ENCODE measurements at regions of chr4 and their contacts with region 1.

Region 1: DNA sequence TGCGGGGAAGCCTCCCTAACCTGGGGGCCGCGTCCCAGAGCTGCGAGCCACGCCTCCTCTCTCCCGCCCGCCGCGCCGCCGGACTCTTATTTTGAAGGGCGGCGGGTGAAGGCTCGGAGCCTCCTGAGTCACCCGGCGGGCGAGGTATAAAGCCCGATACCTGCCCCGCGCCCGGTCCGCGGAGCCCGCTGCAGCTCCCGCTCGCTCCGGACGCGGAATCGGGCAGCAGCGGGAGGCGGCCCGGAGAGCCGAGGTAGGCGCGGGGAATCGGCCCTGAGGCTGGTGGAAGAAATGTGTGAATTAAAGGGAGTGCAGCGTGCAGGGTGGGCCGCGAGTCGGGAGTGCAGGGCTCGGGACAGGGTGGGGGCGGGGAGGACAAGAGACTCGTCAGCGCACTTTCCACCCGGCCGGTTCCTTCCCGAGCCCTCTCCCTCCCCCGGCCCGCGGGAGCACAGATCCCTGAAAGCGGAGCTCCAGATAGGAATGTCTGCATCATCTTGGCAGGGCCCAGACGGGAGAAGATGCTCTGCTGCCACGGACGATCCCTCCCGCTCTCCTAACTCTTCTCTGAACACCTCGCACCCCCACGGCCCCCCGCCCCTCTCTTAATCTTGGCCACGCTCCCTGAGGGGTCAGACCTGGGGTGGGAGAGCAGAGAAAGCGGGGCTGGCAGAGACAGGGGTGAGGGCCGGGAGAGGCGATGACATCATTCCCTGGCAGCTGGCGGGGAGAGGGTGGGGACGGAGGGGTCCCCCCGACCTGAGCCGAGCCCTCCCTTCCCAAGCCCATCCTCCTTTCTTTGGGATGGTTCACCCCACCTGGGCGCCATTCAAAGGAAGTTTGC is 177.9 kb downstream of the CBR4 start:
- DNase-seq: peak; percentile 67 to 79
- H3K4me3 ChIP-seq: peak overlapping the region; percentile 60
- H3K4me3 Mint-ChIP-seq: peak overlapping the region; percentile 71
- H3K27ac Mint-ChIP-seq: peak overlapping the region; percentile 9
- H3K4me1 ChIP-seq: no peaks in the 10 kb centered on the region
- H3K4me1 Mint-ChIP-seq: no peaks in the 10 kb centered on the region
- H3K27me3 ChIP-seq: no peaks in the 10 kb centered on the region
- H3K27me3 Mint-ChIP-seq: no peaks in the 10 kb centered on the region
- CTCF ChIP-seq: no peak

Region 2: GRCh38 chr4:168724686-168725411 is 107.3 kb before region 1 on chr4:
- CTCF ChIA-PET with region 1: no interaction called
- POLR2A ChIA-PET with region 1: interaction called, 11 read pairs
- intact Hi-C with region 1: no loop called
- DNase-seq: no peak
- H3K4me3 ChIP-seq: no peak overlapping the region
- H3K4me3 Mint-ChIP-seq: no peak overlapping the region
- H3K27ac Mint-ChIP-seq: no peak overlapping the region
- H3K4me1 ChIP-seq: no peaks in the 10 kb centered on the region
- H3K4me1 Mint-ChIP-seq: no peaks in the 10 kb centered on the region
- H3K27me3 ChIP-seq: no peaks in the 10 kb centered on the region
- H3K27me3 Mint-ChIP-seq: peaks cover 8% of the 10 kb centered on the region
- CTCF ChIP-seq: no peak

Region 3: GRCh38 chr4:168817370-168817769 is 14.8 kb before region 1 on chr4:
- CTCF ChIA-PET with region 1: no interaction called
- POLR2A ChIA-PET with region 1: interaction called, 7 read pairs
- intact Hi-C with region 1: loop called (anchors 1 kb)
- DNase-seq: no peak
- H3K4me3 ChIP-seq: no peak overlapping the region
- H3K4me3 Mint-ChIP-seq: peak overlapping the region; percentile 64
- H3K27ac Mint-ChIP-seq: no peak overlapping the region
- H3K4me1 ChIP-seq: peaks cover 10% of the 10 kb centered on the region
- H3K4me1 Mint-ChIP-seq: peaks cover 9% of the 10 kb centered on the region
- H3K27me3 ChIP-seq: no peaks in the 10 kb centered on the region
- H3K27me3 Mint-ChIP-seq: no peaks in the 10 kb centered on the region
- CTCF ChIP-seq: no peak